Ovary (tissue), 10 donors: ENCODE measurements at regions of chr4 and their contacts with region 1.

Region 1: GRCh38 chr4:48779998-48780742 is at the start of gene FRYL:
- DNase-seq: peak; percentile 98 to 99 (median 99)
- H3K4me3 ChIP-seq: peak within 1 kb of the TSS; percentile 68
- H3K27ac ChIP-seq: peak within 1 kb of the TSS; percentile 87 to 94
- H3K4me1 ChIP-seq: peaks cover 4% of the 10 kb centered on the region
- H3K27me3 ChIP-seq: no peaks in the 10 kb centered on the region
- CTCF ChIP-seq: no peak
- EP300 ChIP-seq: no peak
- POLR2A ChIP-seq: peak; percentile 41
- total RNA-seq, gene FRYL: 30.7 to 46.0 (median 36.0) TPM

Region 2: DNA sequence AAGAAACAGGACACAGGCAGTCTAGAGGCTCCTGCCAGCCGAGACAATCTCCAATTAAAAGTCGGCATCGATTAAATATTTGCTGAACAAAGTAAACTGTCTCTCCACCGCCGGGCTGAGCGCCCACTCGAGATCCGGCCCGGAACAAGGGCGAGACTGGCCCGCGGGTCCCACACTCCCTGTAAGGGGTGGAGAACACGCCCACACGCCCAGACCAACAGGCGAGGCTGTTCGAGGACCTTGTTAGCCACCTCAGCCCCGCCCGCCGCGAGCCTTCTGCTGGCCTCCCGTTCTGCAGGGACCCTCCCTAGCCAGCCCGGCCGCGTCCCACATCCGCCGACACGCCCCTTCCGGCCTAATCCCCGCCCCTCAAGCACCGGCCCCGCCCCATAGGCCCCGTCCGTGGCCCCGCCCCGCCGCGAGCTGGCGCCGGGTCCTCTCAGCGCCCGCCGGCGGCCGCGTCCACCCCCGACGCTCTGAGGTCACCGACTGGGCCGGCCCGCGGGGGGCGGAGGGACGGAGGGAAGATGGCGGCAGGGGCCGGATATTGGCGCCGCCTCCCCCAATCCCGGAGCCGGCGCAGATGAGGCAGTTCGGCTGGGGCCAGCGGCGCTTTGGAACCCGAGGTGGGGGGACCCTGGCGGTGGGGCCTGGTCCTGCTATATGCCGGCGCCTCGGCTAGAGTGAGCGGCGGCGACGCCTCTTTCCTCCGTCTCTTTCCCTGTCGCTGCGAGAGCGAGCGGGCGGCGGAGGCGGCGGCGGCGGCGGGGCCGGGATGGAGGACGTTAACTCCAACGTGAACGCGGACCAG is 439.0 kb before region 1 on chr4 and contains the start of gene SLAIN2:
- intact Hi-C with region 1: loop called in 1 of 4 experiments (anchors 10 kb)
- DNase-seq: peak; percentile 99 to 100 (median 99)
- H3K4me3 ChIP-seq: peak within 1 kb of the TSS; percentile 59
- H3K27ac ChIP-seq: peak within 1 kb of the TSS; percentile 82 to 96
- H3K4me1 ChIP-seq: peaks cover 4% of the 10 kb centered on the region
- H3K27me3 ChIP-seq: no peaks in the 10 kb centered on the region
- CTCF ChIP-seq: peak; percentile 20 to 70 (median 50)
- EP300 ChIP-seq: no peak
- POLR2A ChIP-seq: peak; percentile 71
- total RNA-seq, gene SLAIN2: 38.4 to 127 (median 81.7) TPM

Region 3: DNA sequence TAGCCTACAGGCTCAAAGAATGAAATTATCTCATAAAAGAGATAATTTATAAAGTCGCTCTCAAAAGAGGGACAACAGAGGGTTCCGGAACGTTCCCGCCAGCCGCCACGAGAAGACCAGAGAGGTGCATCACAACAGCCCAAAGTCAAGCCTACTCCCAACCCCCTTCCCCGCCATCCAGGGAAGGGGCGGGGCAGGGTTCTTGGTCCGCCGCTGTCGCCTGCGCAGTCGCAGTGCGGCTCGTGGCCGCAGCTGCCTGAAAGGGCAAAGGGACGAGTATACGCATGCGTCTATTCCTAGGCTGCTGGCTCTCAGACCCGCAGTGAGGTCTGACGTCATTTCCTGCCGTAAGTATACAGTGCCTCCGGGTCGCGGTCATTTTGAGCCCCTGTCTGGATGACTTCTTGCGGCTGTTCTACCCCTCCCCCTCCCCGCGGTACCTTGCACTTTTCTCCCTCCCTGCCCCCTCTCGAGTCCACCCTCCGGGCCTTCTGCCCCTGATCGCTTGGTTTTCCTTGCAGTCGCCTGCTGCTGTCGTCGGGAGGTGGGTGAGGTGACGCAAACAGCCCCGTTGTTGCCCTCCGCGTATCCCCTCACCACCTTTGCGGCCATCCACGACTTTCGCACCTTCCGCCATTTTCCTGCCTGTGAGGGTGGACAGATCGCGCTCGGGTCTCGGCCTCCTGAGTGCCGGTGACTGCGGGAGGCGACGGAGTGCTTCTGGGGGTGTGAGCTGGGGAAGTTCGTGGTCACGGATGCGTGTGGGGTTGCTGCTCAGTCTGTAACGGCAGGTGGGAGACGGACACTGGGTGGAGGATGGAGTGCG is 50.7 kb after region 1 on chr4 and contains the start of gene OCIAD1:
- intact Hi-C with region 1: loop called in 2 of 4 experiments (anchors 1 to 2 kb)
- DNase-seq: peak; percentile 93 to 97 (median 95)
- H3K4me3 ChIP-seq: peak within 1 kb of the TSS; percentile 87
- H3K27ac ChIP-seq: peak within 1 kb of the TSS; percentile 40 to 73
- H3K4me1 ChIP-seq: peaks cover 6% of the 10 kb centered on the region
- H3K27me3 ChIP-seq: no peaks in the 10 kb centered on the region
- CTCF ChIP-seq: no peak
- EP300 ChIP-seq: no peak
- POLR2A ChIP-seq: peak; percentile 37
- total RNA-seq, gene OCIAD1: 73.4 to 132 (median 111) TPM